Cardiac septum (tissue), 1 donor: ENCODE measurements at regions of chr17 and their contacts with region 1.

Region 1: DNA sequence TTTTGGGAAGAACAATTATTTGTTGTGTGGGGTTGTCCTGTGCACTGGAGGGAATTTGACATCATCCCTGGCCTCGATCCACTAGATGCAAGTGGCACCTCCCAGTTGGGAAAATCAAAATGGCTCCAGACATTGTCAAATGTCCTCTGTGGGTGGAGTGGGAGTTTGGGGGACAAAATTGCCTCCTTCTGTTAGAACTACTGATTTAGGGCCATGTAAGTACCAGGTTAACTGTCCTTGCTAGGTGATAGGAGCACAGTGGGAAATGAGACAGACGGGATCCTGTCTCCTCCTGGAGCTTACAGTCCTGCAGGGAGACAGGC is 56.8 kb downstream of the ARHGAP23 start:
- DNase-seq: no peak

Region 2: DNA sequence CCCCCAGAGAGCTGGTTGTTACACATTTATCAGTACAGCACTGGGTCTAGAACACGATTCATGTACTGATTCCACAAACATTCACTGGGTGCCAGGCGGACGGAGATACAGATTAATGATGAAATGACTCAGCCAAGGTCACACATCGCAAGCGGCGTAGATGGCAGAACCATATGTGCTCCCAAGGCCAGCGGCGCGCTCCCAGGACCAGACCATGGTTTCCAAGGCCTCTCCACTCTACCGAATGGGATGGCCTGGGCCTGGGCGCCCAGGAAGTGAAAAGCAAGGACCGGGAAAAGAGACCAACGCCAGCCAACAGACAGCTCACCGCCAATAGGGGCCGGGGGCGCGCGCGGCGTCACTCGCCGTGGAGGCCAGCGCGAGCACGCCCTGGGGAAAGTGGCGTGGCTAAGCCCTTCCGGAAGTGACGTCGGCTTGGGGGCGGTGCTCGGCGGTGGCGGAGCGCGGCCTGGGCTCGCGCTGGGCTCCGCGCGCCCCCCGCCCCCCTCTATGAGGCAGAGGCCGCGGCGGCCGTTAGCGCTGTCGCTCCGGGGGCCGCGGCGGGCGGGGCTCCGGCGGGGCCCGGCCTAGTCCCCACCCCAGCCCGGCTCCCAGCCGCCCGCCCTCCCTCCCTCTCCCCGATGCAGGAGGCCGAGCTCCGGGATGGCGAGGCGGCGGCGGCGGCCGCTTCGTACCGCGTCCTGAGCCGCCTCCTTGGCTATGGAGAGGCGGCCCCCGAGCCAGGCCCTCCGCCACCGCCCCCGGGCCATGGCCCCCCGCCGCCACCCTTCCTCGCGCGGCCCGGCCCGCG is 133.5 kb before region 1 on chr17 and contains the start of gene SOCS7:
- intact Hi-C with region 1: loop called (anchors 10 kb)
- DNase-seq: peak; percentile 97
- total RNA-seq, gene SOCS7: 17.8 TPM

Region 3: DNA sequence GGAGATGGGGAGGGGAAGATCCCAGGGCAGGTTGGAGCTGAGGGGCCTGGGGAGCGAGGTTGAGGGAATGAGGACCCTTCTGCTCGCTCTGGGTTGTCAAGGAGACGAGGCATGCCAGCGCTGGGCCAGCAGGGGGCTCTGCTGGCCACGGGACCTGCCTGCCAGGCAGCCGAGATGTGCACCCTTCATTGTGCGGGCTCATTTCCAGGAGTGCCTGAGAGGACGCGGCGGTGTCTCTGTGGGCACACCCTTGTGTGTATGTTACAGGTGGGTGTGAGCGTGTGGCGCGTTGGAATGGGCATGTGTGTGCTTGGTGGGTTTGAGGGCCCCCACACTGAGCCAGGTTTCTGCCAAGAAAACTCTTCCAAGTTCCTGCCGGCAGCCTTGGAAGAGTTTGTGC is 41.0 kb before region 1 on chr17:
- intact Hi-C with region 1: loop called (anchors 1 kb)
- DNase-seq: no peak

Region 4: DNA sequence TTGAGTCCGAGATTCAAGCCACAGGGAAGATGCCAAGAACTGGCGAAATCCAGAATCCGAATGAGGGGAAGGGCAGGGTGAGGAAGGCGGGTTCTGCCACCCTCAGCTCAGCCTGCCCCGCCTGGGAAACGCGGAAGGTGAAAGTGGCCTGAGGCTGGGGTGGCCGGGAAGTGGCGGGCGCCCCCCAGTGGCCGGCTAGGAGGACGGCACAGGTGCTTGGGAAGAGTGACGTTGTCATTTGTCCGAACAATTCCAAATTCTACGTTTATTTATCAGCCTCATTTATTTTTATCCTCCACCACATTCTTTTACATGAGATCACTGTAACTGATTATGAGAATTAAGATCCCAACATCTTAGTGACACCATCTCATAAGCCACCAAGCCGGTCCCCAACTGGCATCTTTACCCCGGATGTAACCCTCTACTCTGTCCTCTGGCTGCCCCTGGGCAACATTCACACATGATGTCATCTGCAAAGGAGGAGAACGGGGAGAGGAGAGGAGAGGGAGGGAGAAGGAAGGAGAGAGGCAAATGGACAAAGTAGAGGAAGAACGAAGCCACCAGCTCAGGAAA is 99.3 kb after region 1 on chr17:
- intact Hi-C with region 1: loop called (anchors 5 kb)
- DNase-seq: no peak

Region 5: DNA sequence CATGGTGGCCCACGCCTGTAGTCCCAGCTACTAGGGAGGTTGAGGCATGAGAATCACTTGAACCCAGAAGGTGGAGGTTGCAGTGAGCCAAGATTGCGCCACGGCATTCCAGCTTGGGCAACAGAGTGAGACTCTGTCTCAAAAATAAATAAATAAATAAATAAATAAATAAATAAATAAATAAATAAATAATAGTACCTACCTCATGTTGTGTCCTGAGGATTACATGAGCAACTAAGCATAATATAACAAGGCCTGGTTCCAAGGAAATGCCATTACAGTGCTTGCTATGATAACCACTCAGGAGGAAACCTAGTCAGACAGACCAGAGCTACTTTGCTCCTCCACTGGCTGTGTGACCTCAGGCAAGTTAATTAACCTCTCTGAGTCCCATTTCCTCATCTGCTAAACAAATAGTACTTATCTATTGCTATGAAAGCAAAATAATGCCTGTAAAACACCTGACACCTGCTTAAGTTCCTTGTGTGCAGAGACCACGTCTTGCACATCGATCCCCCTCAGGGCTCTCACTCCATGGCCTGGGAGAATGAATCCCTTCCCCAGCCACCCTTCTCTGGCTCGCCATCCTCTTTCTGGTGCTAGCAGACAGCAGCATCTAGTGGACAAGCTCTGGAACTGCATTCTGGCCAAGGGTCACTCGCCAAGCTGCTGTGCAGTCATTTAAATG is 182.1 kb after region 1 on chr17:
- intact Hi-C with region 1: loop called (anchors 5 kb)
- DNase-seq: no peak